ENCODE measurements at regions of chr1 and their contacts with region 1.

Region 1: DNA sequence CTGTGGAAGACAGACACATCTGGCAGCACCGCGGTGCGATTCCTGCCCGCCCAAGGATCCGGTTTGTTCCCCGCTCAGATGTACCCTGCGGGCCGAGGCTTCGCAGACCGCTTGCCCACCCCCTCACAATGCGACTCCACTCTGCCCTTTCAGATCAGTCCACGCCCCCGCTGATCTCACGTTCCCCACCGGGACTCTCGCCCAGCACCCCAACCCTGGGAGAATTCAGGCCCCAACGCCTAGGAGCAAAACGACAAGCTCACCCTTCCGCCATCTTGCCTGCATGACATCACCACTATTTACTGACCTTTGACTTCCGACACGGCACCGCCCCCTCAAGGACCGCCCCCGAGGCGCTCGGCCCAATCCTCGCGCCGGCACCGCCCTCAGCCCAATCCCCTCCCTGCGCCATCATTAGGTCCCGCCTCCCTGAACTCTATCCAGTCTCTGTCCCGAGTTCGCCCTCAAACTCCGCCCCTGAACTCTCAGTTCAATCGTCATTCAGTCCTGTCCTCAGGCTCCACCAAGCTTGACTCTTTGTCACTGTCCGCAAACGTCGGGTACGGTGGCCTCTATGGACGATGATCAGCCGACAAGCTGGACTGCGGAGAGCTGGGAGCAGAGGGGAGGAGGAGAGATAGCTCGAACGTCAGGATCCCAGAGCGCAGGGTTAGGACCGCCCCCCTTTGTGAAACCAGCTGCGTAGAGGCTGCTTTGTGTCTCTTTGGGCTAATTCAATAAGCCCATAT is at the start of gene BSDC1:
- DNase-seq: peak; percentile 94 to 99 (median 98)
- ATAC-seq: peak; percentile 99
- H3K4me3 ChIP-seq: peak within 1 kb of the TSS; percentile 90
- H3K4me3 Mint-ChIP-seq: peak within 1 kb of the TSS in 9 of 10 donors; percentile 92 to 100 (median 99)
- H3K27ac ChIP-seq: peak within 1 kb of the TSS; percentile 95
- H3K27ac Mint-ChIP-seq: peak within 1 kb of the TSS; percentile 94 to 100 (median 98)
- H3K4me1 ChIP-seq: peaks cover 15 to 30% of the 10 kb centered on the region in 2 donors
- H3K4me1 Mint-ChIP-seq: peaks cover 4 to 40% (median 23%) of the 10 kb centered on the region in 7 donors
- H3K27me3 ChIP-seq: no peaks in the 10 kb centered on the region
- H3K27me3 Mint-ChIP-seq: peaks cover 0 to 19% (median 0%) of the 10 kb centered on the region in 5 donors
- total RNA-seq, gene BSDC1: 51.7 to 186 (median 121) TPM

Region 2: GRCh38 chr1:31644560-31645273 is 749.6 kb before region 1 on chr1 and contains the start of gene PEF1:
- CTCF ChIA-PET with region 1: no interaction called
- POLR2A ChIA-PET with region 1: interaction called, 5 read pairs
- intact Hi-C with region 1: loop called (anchors 1 kb)
- DNase-seq: peak; percentile 97 to 100 (median 99)
- ATAC-seq: peak; percentile 94
- H3K4me3 ChIP-seq: peak within 1 kb of the TSS; percentile 91
- H3K4me3 Mint-ChIP-seq: peak within 1 kb of the TSS; percentile 92 to 100 (median 98)
- H3K27ac ChIP-seq: peak within 1 kb of the TSS; percentile 98
- H3K27ac Mint-ChIP-seq: peak within 1 kb of the TSS; percentile 98 to 100 (median 99)
- H3K4me1 ChIP-seq: peaks cover 27 to 30% of the 10 kb centered on the region in 2 donors
- H3K4me1 Mint-ChIP-seq: peaks cover 18 to 47% (median 40%) of the 10 kb centered on the region in 7 donors
- H3K27me3 ChIP-seq: no peaks in the 10 kb centered on the region
- H3K27me3 Mint-ChIP-seq: no peaks in the 10 kb centered on the region
- total RNA-seq, gene PEF1: 37.7 to 49.8 (median 40.8) TPM

Region 3: DNA sequence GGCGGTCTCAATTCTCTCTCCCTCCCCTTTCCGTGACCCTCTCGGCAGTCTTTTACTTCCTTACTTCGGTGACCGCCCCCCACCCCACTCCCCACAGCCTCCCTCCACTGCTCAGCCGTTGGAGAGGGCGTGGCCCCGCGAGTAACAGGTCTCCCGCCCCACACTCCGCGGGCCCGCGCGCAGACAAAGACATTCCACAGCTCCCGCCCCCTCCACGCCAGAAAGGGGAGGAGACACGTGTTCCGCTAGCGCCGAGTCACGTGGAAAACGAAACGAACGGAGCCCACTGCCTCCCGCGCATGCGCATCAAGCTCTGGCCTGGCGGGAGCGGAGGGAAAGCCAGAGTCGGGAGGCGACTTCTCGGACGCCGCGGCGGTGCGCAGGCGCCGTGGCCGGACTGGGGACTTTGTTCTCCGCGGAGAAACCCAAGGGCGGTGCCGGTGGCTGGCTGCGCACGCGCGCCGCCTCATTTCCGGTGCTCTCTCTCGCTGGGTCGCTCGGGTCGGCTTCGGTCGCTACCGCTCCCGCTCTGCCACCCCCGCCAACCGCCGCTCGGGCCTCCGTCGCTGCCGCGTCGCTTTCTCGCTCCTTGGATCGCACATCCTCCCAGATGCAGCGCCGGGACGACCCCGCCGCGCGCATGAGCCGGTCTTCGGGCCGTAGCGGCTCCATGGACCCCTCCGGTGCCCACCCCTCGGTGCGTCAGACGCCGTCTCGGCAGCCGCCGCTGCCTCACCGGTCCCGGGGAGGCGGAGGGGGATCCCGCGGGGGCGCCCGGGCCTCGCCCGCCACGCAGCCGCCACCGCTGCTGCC is 380.7 kb before region 1 on chr1 and contains the start of gene KHDRBS1:
- CTCF ChIA-PET with region 1: no interaction called
- POLR2A ChIA-PET with region 1: interaction called, 3 read pairs
- intact Hi-C with region 1: loop called (anchors 1 to 10 kb)
- DNase-seq: peak; percentile 94 to 99 (median 98)
- ATAC-seq: peak; percentile 93
- H3K4me3 ChIP-seq: peak within 1 kb of the TSS; percentile 98
- H3K4me3 Mint-ChIP-seq: peak within 1 kb of the TSS; percentile 89 to 98 (median 96)
- H3K27ac ChIP-seq: peak within 1 kb of the TSS; percentile 96
- H3K27ac Mint-ChIP-seq: peak within 1 kb of the TSS; percentile 90 to 99 (median 97)
- H3K4me1 ChIP-seq: peaks cover 10 to 14% of the 10 kb centered on the region in 2 donors
- H3K4me1 Mint-ChIP-seq: peaks cover 17 to 45% (median 31%) of the 10 kb centered on the region in 7 donors
- H3K27me3 ChIP-seq: no peaks in the 10 kb centered on the region
- H3K27me3 Mint-ChIP-seq: peaks cover 0 to 2% (median 0%) of the 10 kb centered on the region in 5 donors
- total RNA-seq, gene KHDRBS1: 89.2 to 162 (median 125) TPM

Region 4: GRCh38 chr1:32179443-32180185 is 214.7 kb before region 1 on chr1 and contains the start of gene TXLNA:
- CTCF ChIA-PET with region 1: interaction called, 4 read pairs
- POLR2A ChIA-PET with region 1: interaction called, 14 read pairs
- intact Hi-C with region 1: loop called (anchors 1 kb)
- DNase-seq: peak; percentile 80 to 93 (median 86)
- ATAC-seq: peak; percentile 91
- H3K4me3 ChIP-seq: peak within 1 kb of the TSS; percentile 89
- H3K4me3 Mint-ChIP-seq: peak within 1 kb of the TSS; percentile 86 to 94 (median 91)
- H3K27ac ChIP-seq: peak within 1 kb of the TSS; percentile 89
- H3K27ac Mint-ChIP-seq: peak within 1 kb of the TSS; percentile 84 to 98 (median 92)
- H3K4me1 ChIP-seq: peaks cover 17 to 21% of the 10 kb centered on the region in 2 donors
- H3K4me1 Mint-ChIP-seq: peaks cover 22 to 45% (median 38%) of the 10 kb centered on the region in 7 donors
- H3K27me3 ChIP-seq: no peaks in the 10 kb centered on the region
- H3K27me3 Mint-ChIP-seq: no peaks in the 10 kb centered on the region
- total RNA-seq, gene TXLNA: 16.7 to 83.3 (median 36.3) TPM

Region 5: GRCh38 chr1:32221980-32222755 is 172.1 kb before region 1 on chr1 and contains the starts of genes EIF3I and TMEM234:
- CTCF ChIA-PET with region 1: interaction called, 3 read pairs
- POLR2A ChIA-PET with region 1: interaction called, 3 read pairs
- intact Hi-C with region 1: loop called (anchors 1 kb)
- DNase-seq: peak; percentile 71 to 94 (median 89)
- ATAC-seq: peak; percentile 95
- H3K4me3 ChIP-seq: peak within 1 kb of the TSS; percentile 99
- H3K4me3 Mint-ChIP-seq: peak within 1 kb of the TSS; percentile 90 to 98 (median 97)
- H3K27ac ChIP-seq: peak within 1 kb of the TSS; percentile 99
- H3K27ac Mint-ChIP-seq: peak within 1 kb of the TSS; percentile 94 to 99 (median 98)
- H3K4me1 ChIP-seq: peaks cover 23 to 24% of the 10 kb centered on the region in 2 donors
- H3K4me1 Mint-ChIP-seq: peaks cover 14 to 57% (median 37%) of the 10 kb centered on the region in 7 donors
- H3K27me3 ChIP-seq: no peaks in the 10 kb centered on the region
- H3K27me3 Mint-ChIP-seq: no peaks in the 10 kb centered on the region
- total RNA-seq, gene EIF3I: 82.6 to 182 (median 104) TPM
- total RNA-seq, gene TMEM234: 15.9 to 29.6 (median 21.4) TPM

Region 6: GRCh38 chr1:32335790-32336590 is 58.3 kb before region 1 on chr1 and contains the start of gene MARCKSL1:
- CTCF ChIA-PET with region 1: interaction called, 4 read pairs
- POLR2A ChIA-PET with region 1: interaction called, 34 read pairs
- intact Hi-C with region 1: loop called (anchors 1 to 2 kb)
- DNase-seq: peak; percentile 81 to 90 (median 87)
- ATAC-seq: peak; percentile 64
- H3K4me3 ChIP-seq: peak within 1 kb of the TSS; percentile 60
- H3K4me3 Mint-ChIP-seq: peak within 1 kb of the TSS; percentile 82 to 93 (median 90)
- H3K27ac ChIP-seq: peak within 1 kb of the TSS; percentile 70
- H3K27ac Mint-ChIP-seq: peak within 1 kb of the TSS; percentile 74 to 95 (median 89)
- H3K4me1 ChIP-seq: peaks cover 20 to 33% of the 10 kb centered on the region in 2 donors
- H3K4me1 Mint-ChIP-seq: peaks cover 38 to 52% (median 43%) of the 10 kb centered on the region in 7 donors
- H3K27me3 ChIP-seq: no peaks in the 10 kb centered on the region
- H3K27me3 Mint-ChIP-seq: peaks cover 0 to 1% (median 0%) of the 10 kb centered on the region in 5 donors
- total RNA-seq, gene MARCKSL1: 22.2 to 70.2 (median 41.7) TPM

Region 7: DNA sequence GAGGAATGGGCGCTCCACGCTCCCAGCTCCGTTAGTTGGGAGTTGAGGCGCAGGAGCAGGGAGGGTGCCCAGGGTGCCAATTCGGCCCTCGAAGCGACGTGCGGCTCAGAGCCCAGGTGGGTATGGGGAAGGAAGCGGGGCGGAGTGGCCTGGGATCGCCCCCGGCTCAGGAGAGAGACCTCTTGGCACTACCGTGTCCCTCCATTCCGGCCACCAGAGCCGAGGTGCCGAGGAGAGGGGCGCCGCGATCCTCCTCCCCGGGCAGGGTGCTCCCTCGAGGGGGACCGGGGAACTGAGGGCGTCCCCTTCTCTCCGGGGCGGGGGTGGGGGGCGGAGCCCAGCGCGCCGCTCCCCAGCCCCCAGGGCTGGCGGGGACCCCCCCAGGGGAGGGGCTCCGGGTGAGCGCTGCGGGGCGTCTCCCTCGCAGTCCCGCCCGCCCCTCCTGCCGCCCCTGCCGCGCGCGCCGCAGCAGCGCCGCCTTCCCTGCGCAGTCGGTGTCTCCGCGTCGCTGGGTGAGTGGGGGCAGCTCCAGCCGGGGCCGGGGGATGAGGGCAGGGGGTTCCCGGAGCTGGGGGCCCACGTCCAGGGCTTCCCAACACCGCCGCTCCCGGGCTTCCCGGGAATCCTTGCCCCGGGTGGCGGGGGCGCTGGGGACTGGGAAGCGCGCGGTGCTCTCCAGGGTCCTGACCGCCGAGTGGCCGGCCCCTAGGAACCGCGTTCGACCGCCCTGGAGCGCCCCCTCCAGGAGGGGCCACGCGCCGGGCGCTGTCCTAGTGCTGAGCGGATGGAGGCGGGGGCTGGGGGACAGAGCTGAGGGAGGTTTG is 491.9 kb after region 1 on chr1 and contains the start of gene HPCA:
- CTCF ChIA-PET with region 1: no interaction called
- POLR2A ChIA-PET with region 1: no interaction called
- intact Hi-C with region 1: no loop called
- DNase-seq: peak in 3 of 9 donors; percentile 10 to 68 (median 23)
- ATAC-seq: peak; percentile 79
- H3K4me3 ChIP-seq: no peak within 1 kb of the TSS
- H3K4me3 Mint-ChIP-seq: peak within 1 kb of the TSS in 2 of 10 donors; percentile 38 to 43
- H3K27ac ChIP-seq: no peak within 1 kb of the TSS
- H3K27ac Mint-ChIP-seq: no peak within 1 kb of the TSS
- H3K4me1 ChIP-seq: no peaks in the 10 kb centered on the region
- H3K4me1 Mint-ChIP-seq: peaks cover 0 to 14% (median 5%) of the 10 kb centered on the region in 7 donors
- H3K27me3 ChIP-seq: peaks cover 7 to 15% of the 10 kb centered on the region in 2 donors
- H3K27me3 Mint-ChIP-seq: peaks cover 61 to 81% (median 65%) of the 10 kb centered on the region in 5 donors
- total RNA-seq, gene HPCA: 0.31 to 0.43 TPM in 2 of 5 experiments, not detected in the others

Region 8: DNA sequence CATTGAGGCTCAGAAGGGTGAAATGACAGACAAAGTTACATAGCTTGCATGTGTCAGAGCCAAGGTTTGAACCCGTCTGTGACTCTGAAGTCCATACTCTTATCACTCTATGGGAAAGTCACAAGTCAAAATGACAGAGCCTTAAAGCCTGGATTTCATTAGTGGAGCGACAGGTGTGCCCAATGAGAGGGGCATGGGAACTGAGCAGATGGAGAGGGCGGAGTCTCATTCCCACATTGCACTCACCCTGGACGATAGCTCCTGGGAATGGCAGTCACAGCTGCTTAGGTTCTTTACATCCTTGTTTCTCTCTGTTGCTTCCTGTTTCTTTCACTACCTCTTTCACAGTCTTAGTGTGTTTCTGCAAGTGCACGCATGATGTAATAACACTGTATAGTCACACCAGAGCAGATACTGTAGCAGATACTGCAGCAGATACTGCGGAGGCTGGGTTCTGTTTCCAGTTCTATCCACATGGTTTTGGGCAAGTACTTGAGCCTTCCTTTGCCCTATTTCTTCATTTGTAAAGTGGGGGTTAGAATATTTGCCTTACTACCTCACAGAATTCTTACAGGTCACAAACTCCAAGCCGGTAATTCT is 1205.3 kb after region 1 on chr1:
- CTCF ChIA-PET with region 1: no interaction called
- POLR2A ChIA-PET with region 1: no interaction called
- intact Hi-C with region 1: no loop called
- DNase-seq: no peak
- ATAC-seq: no peak
- H3K4me3 ChIP-seq: no peak overlapping the region
- H3K4me3 Mint-ChIP-seq: no peak overlapping the region
- H3K27ac ChIP-seq: no peak overlapping the region
- H3K27ac Mint-ChIP-seq: no peak overlapping the region
- H3K4me1 ChIP-seq: no peaks in the 10 kb centered on the region
- H3K4me1 Mint-ChIP-seq: no peaks in the 10 kb centered on the region
- H3K27me3 ChIP-seq: no peaks in the 10 kb centered on the region
- H3K27me3 Mint-ChIP-seq: peaks cover 11 to 59% (median 43%) of the 10 kb centered on the region in 5 donors

Measured in naive thymus-derived CD4-positive, alpha-beta T cell (primary cell).